A673 (cell line): ENCODE measurements at regions of chrX and their contacts with region 1.

Region 1: GRCh38 chrX:151675121-151675746 is 20.0 kb upstream of the PRRG3 start:
- DNase-seq: no peak
- H3K4me3 ChIP-seq: no peak overlapping the region
- H3K27ac ChIP-seq: no peak overlapping the region
- H3K4me1 ChIP-seq: no peaks in the 10 kb centered on the region
- H3K27me3 ChIP-seq: no peaks in the 10 kb centered on the region
- CTCF ChIP-seq: no peak

Region 2: GRCh38 chrX:150568320-150569154 is 1106.7 kb before region 1 on chrX and contains the start of gene MTM1:
- CTCF ChIA-PET with region 1: no interaction called
- POLR2A ChIA-PET with region 1: no interaction called
- intact Hi-C with region 1: loop called (anchors 10 kb)
- DNase-seq: peak; percentile 95
- H3K4me3 ChIP-seq: peak within 1 kb of the TSS; percentile 72
- H3K27ac ChIP-seq: peak within 1 kb of the TSS; percentile 61
- H3K4me1 ChIP-seq: peaks cover 11% of the 10 kb centered on the region
- H3K27me3 ChIP-seq: no peaks in the 10 kb centered on the region
- CTCF ChIP-seq: no peak
- total RNA-seq, gene MTM1: 7.1 and 9.4 TPM in 2 replicates

Region 3: GRCh38 chrX:151505796-151506195 is 169.4 kb before region 1 on chrX:
- CTCF ChIA-PET with region 1: no interaction called
- POLR2A ChIA-PET with region 1: no interaction called
- intact Hi-C with region 1: loop called (anchors 5 kb)
- DNase-seq: peak; percentile 37
- H3K4me3 ChIP-seq: no peak overlapping the region
- H3K27ac ChIP-seq: no peak overlapping the region
- H3K4me1 ChIP-seq: no peaks in the 10 kb centered on the region
- H3K27me3 ChIP-seq: peaks cover 4% of the 10 kb centered on the region
- CTCF ChIP-seq: peak; percentile 56